ENCODE measurements at regions of chr2 and their contacts with region 1.

Region 1: DNA sequence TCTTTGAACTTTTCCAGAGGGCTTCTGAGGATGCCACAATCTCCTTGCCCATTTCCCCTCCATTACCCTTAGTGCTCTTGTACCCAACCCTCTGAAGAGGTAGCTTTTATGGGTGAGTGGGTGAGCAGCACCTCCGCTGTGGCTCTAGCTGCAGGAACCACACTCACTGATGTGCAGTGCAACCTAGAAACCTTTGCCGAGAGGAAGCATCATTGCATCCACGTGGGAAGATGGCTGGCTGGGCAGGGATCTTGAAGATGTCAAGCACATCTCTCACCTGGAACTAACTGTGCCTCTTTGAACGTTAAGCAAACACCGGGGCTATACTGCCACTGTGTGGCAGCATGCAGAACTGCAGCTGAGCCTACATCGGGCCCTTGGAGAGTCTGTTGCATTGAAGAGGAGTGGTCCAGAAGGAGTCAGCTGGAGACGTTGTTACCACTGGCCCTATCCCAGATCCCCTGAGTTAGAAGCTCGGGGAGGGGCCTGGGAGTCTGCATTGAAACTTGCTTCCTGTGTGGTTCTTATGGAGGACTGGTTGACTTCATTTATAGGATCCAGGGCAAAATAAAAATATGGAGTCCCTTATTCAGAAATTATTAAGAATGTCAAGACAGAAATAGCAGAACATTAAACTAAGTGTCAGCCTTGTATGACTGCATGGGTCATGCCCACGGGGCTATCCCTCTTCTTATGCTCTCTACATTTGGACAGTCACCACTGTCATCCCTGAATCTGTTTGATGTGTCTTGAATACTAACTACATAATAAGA is 28.7 kb downstream of the IGFBP5 start:
- DNase-seq: no peak
- H3K4me3 ChIP-seq: no peak overlapping the region
- H3K27ac ChIP-seq: peak overlapping the region in 3 of 4 donors; percentile 61 to 70 (median 70)
- H3K4me1 ChIP-seq: peaks cover 19 to 31% (median 25%) of the 10 kb centered on the region in 4 donors
- H3K27me3 ChIP-seq: no peaks in the 10 kb centered on the region
- CTCF ChIP-seq: peak; percentile 98 to 99 (median 99)
- EP300 ChIP-seq: no peak
- POLR2A ChIP-seq: no peak

Region 2: DNA sequence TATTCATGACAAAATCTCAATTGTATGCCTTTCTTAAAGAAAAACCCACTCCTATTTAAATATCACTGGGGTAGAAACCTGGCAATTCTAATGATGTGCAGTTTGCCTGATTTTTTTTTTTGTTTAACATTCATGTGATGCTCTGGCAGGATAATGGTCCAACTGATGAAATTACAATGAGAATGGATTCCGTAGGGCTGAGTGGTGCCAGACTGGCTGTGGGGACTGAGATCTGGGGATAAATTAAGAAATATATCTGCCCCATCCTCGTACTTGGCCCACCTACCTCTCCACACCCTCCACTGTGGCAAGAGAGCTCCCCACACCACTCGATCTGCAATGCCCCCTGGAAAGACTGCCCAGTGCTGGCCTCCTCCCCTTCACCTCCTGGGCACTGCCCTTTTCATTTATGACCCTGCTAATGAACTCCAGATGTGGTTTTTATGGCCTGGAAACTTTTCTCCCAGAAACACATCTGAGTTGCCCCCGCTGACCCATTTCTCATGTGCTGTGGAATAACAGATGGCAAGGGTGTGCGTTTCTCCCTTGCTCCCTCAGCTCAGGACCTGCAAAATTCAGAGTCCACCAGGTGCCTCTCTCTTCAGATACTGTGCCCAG is 201.0 kb before region 1 on chr2:
- intact Hi-C with region 1: no loop called
- DNase-seq: no peak
- H3K4me3 ChIP-seq: no peak overlapping the region
- H3K27ac ChIP-seq: no peak overlapping the region
- H3K4me1 ChIP-seq: no peaks in the 10 kb centered on the region
- H3K27me3 ChIP-seq: no peaks in the 10 kb centered on the region
- CTCF ChIP-seq: no peak
- EP300 ChIP-seq: no peak
- POLR2A ChIP-seq: no peak

Region 3: GRCh38 chr2:216519154-216519762 is 147.4 kb before region 1 on chr2:
- intact Hi-C with region 1: loop called (anchors 1 kb)
- DNase-seq: no peak
- H3K4me3 ChIP-seq: no peak overlapping the region
- H3K27ac ChIP-seq: no peak overlapping the region
- H3K4me1 ChIP-seq: peaks cover 3 to 26% (median 12%) of the 10 kb centered on the region in 4 donors
- H3K27me3 ChIP-seq: no peaks in the 10 kb centered on the region
- CTCF ChIP-seq: peak; percentile 79 to 86 (median 85)
- EP300 ChIP-seq: no peak
- POLR2A ChIP-seq: no peak

Measured in esophagus muscularis mucosa (tissue), 4 donors.